ENCODE measurements at regions of chr21 and their contacts with region 1.

Region 1: GRCh38 chr21:38733973-38734546 is 71.7 kb upstream of the ETS2 start:
- ATAC-seq: peak; percentile 64 to 97 (median 92)
- H3K4me3 ChIP-seq: peak overlapping the region; percentile 9 to 30 (median 18)
- H3K27ac ChIP-seq: no peak overlapping the region
- H3K4me1 ChIP-seq: peaks cover 0 to 6% of the 10 kb centered on the region in 2 donors

Region 2: GRCh38 chr21:36718951-36719501 is 2015.0 kb before region 1 on chr21:
- in situ Hi-C with region 1: no loop called
- ATAC-seq: peak in 6 of 8 experiments; percentile 26 to 96 (median 76)
- H3K4me3 ChIP-seq: no peak overlapping the region
- H3K27ac ChIP-seq: no peak overlapping the region
- H3K4me1 ChIP-seq: peaks cover 11 to 12% of the 10 kb centered on the region in 2 donors

Region 3: DNA sequence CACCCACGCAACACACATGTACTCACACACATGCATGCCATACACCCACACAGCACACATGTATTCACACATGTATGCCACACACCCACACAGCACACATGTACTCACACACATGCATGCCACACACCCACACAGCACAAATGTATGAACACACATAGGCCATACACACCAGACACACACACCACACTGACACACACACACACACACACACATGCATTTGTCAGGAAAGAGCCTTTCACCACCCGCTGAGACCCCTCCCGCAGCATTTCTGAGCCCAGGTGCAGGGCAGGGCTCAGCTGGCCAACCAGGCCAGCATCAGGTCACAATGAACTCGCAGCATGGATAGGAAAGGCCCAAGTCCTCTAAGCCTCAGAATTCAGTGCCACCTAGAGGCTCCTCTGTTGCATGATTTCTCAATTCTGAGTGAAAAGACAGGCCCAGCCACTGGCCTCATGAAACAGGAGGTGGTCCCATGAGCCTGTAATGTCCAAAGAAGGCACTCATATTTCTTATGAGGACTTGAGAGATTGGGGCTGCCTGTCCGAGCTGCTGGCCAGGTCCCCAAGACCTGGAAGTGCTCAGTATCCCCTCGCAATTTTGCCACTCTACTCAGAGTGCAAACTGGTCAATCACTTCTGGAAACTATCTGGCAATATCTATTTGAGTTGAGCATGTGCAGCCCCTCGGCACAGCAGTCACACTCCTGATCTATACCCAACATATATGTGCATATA is 391.9 kb after region 1 on chr21:
- in situ Hi-C with region 1: loop called (anchors 10 to 25 kb)
- ATAC-seq: peak; percentile 90 to 100 (median 96)
- H3K4me3 ChIP-seq: no peak overlapping the region
- H3K27ac ChIP-seq: no peak overlapping the region
- H3K4me1 ChIP-seq: no peaks in the 10 kb centered on the region

Region 4: DNA sequence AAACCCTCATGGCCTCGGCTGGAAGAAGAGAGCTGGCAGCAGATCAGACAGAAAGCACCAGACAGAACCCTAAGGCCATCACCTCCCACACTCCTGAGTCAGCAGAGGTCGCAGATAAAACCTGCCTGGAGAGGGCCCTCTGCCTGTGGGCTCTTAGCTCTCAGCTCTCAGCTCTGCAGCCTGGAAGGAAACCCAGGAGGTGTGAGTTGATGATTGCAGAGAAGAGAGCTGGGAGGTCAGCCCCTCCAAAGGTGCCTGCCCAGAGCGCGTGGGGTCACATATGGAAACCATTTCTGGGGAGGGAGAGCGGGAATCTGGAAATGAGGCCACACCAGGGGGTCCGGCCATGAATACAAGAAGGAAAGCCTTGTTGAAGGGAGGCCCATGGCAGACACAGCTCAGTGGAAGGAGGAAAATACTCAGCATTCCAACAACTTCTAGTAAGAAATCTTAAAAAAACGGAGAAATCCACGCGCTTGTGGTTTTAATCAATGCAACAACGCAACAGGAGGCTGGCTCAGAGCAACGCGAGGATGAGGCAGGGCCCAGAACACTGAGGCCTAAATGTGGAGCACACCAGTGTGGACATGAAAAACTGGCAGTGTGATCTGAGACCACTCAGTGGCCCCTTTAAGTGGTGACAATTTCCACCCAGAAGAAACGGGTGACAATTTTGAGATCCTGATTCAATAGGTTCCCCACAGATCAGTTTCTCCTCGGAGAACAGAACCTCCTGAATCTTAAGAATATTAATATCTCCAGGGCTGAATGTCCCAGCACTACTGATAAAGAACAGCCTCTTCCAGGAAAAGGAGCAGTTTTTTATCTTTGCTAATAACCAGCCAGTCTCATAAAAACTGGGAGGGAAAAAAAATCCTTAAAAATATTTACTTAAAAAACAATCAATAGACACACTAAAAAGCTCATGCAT is 403.5 kb after region 1 on chr21:
- in situ Hi-C with region 1: loop called in 8 of 9 experiments (anchors 10 to 25 kb)
- ATAC-seq: peak in 3 of 8 experiments; percentile 14 to 38 (median 21)
- H3K4me3 ChIP-seq: no peak overlapping the region
- H3K27ac ChIP-seq: no peak overlapping the region
- H3K4me1 ChIP-seq: peaks cover 0 to 3% of the 10 kb centered on the region in 2 donors

Measured in motor neuron (in vitro differentiated cells).